ENCODE measurements at regions of chrX and their contacts with region 1.

Region 1: DNA sequence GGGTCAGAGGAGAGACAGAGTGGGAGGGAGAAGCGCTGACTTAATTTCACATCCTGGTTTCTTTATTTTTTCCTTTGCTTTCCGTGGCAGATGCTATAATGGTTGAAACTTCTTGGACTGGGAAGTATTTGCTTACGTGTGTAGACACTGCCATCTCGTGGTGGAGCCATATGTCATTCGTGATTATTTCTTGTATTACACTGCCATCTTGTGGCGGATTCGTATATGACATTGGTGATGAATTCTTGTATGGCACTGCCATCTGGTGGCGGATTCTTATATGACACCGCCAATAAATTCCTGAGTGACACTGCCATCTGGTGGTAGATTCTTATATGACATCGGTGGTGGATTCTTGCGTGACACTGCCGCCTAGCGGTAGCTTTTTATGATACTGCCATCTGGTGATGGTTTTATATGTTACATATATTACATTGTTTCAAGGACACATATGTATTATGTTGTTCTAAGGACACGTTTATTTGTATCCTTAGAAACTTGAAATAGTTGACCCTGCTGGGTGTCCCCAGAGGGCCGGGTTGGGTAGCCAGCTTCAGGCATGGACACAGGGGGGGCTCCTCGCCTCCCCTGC is 37.3 kb upstream of the CLCN4 start:
- DNase-seq: peak; percentile 43 to 88 (median 66)
- ATAC-seq: peak; percentile 80
- H3K4me3 ChIP-seq: no peak overlapping the region
- H3K4me3 Mint-ChIP-seq: no peak overlapping the region
- H3K27ac ChIP-seq: no peak overlapping the region
- H3K27ac Mint-ChIP-seq: peak overlapping the region; percentile 5
- H3K4me1 ChIP-seq: peaks cover 16% of the 10 kb centered on the region
- H3K4me1 Mint-ChIP-seq: peaks cover 5% of the 10 kb centered on the region
- H3K27me3 ChIP-seq: no peaks in the 10 kb centered on the region
- H3K27me3 Mint-ChIP-seq: no peaks in the 10 kb centered on the region
- CTCF ChIP-seq: peak; percentile 100

Region 2: DNA sequence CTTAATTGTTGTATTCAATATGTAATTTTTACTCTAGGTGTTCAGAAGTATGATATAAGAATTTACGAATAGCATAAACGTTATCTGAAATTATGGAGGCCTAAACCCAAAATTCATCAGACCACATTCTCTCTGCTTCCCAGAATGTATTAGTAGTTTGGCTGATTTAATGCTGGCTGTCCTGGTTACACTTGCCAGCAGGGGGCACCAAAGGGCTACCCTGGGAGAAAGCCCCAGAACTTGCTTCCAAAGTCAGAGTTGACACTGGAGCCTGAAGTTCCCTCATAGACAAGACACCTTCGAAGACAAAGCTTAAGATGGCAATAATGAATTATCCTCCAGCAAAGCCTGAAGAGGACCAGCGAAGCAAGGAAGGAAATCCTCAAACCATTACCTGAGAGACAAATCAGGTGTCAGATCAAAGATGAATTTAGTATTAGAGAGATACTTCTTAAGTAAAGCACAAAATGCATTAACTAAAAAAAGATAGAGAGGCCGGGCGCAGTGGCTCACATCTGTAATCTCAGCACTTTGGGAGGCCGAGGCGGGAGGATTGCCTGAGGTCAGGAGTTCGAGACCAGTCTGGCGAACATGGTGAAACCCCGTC is 1376.3 kb before region 1 on chrX:
- CTCF ChIA-PET with region 1: no interaction called
- POLR2A ChIA-PET with region 1: no interaction called
- intact Hi-C with region 1: loop called (anchors 1 to 5 kb)
- DNase-seq: peak; percentile 27 to 74 (median 52)
- ATAC-seq: peak; percentile 46
- H3K4me3 ChIP-seq: no peak overlapping the region
- H3K4me3 Mint-ChIP-seq: no peak overlapping the region
- H3K27ac ChIP-seq: no peak overlapping the region
- H3K27ac Mint-ChIP-seq: no peak overlapping the region
- H3K4me1 ChIP-seq: no peaks in the 10 kb centered on the region
- H3K4me1 Mint-ChIP-seq: no peaks in the 10 kb centered on the region
- H3K27me3 ChIP-seq: peaks cover 0 to 2% of the 10 kb centered on the region in 2 experiments
- H3K27me3 Mint-ChIP-seq: peaks cover 11% of the 10 kb centered on the region
- CTCF ChIP-seq: peak; percentile 71

Region 3: GRCh38 chrX:8815464-8816065 is 1303.9 kb before region 1 on chrX:
- CTCF ChIA-PET with region 1: no interaction called
- POLR2A ChIA-PET with region 1: no interaction called
- intact Hi-C with region 1: loop called in 1 of 2 experiments (anchors 10 kb)
- DNase-seq: peak in 5 of 14 experiments; percentile 5 to 51 (median 49)
- ATAC-seq: no peak
- H3K4me3 ChIP-seq: no peak overlapping the region
- H3K4me3 Mint-ChIP-seq: no peak overlapping the region
- H3K27ac ChIP-seq: no peak overlapping the region
- H3K27ac Mint-ChIP-seq: no peak overlapping the region
- H3K4me1 ChIP-seq: no peaks in the 10 kb centered on the region
- H3K4me1 Mint-ChIP-seq: no peaks in the 10 kb centered on the region
- H3K27me3 ChIP-seq: no peaks in the 10 kb centered on the region
- H3K27me3 Mint-ChIP-seq: peaks cover 5% of the 10 kb centered on the region
- CTCF ChIP-seq: peak; percentile 69

Region 4: GRCh38 chrX:9885150-9885549 is 234.3 kb before region 1 on chrX:
- CTCF ChIA-PET with region 1: no interaction called
- POLR2A ChIA-PET with region 1: no interaction called
- intact Hi-C with region 1: loop called in 1 of 2 experiments (anchors 5 kb)
- DNase-seq: peak in 13 of 14 experiments; percentile 8 to 64 (median 34)
- ATAC-seq: peak; percentile 49
- H3K4me3 ChIP-seq: no peak overlapping the region
- H3K4me3 Mint-ChIP-seq: no peak overlapping the region
- H3K27ac ChIP-seq: no peak overlapping the region
- H3K27ac Mint-ChIP-seq: no peak overlapping the region
- H3K4me1 ChIP-seq: peaks cover 3% of the 10 kb centered on the region
- H3K4me1 Mint-ChIP-seq: peaks cover 6% of the 10 kb centered on the region
- H3K27me3 ChIP-seq: no peaks in the 10 kb centered on the region
- H3K27me3 Mint-ChIP-seq: peaks cover 6% of the 10 kb centered on the region
- CTCF ChIP-seq: peak; percentile 50

Region 5: DNA sequence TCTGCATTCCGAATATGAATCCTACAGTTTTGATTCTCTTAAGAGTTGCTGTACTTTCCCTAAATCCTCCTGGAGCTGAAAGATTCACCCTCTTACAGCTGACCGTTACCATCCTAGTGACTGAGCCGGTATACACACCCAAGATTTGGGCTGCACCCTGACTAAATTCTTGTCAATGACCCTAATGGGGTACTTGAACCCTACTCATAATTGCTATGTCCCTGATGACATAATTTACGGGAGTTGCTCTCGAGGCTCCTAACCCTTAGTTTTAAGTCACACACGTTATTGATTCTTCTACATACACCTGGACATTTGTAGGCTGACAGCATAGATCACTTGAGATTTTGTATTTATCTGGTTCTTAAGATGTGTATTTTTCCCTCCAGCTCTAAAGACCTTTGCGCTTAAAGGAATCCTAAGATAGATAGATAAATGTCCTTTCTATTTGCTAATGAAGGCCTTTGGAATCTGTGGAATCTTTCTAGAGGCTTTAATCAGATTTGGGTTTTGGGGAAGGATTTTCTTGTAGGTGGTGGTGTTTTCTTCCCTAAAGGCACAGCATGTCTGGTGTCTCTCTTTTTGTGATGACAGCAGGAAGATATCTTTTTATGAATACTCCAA is 114.5 kb before region 1 on chrX:
- CTCF ChIA-PET with region 1: interaction called, 12 read pairs
- POLR2A ChIA-PET with region 1: no interaction called
- intact Hi-C with region 1: no loop called
- DNase-seq: no peak
- ATAC-seq: no peak
- H3K4me3 ChIP-seq: no peak overlapping the region
- H3K4me3 Mint-ChIP-seq: no peak overlapping the region
- H3K27ac ChIP-seq: no peak overlapping the region
- H3K27ac Mint-ChIP-seq: no peak overlapping the region
- H3K4me1 ChIP-seq: no peaks in the 10 kb centered on the region
- H3K4me1 Mint-ChIP-seq: no peaks in the 10 kb centered on the region
- H3K27me3 ChIP-seq: no peaks in the 10 kb centered on the region
- H3K27me3 Mint-ChIP-seq: no peaks in the 10 kb centered on the region
- CTCF ChIP-seq: no peak

Region 6: GRCh38 chrX:10039821-10040793 is 79.4 kb before region 1 on chrX:
- CTCF ChIA-PET with region 1: no interaction called
- POLR2A ChIA-PET with region 1: no interaction called
- intact Hi-C with region 1: no loop called
- DNase-seq: no peak
- ATAC-seq: no peak
- H3K4me3 ChIP-seq: no peak overlapping the region
- H3K4me3 Mint-ChIP-seq: no peak overlapping the region
- H3K27ac ChIP-seq: no peak overlapping the region
- H3K27ac Mint-ChIP-seq: no peak overlapping the region
- H3K4me1 ChIP-seq: no peaks in the 10 kb centered on the region
- H3K4me1 Mint-ChIP-seq: no peaks in the 10 kb centered on the region
- H3K27me3 ChIP-seq: no peaks in the 10 kb centered on the region
- H3K27me3 Mint-ChIP-seq: no peaks in the 10 kb centered on the region
- CTCF ChIP-seq: no peak

Region 7: DNA sequence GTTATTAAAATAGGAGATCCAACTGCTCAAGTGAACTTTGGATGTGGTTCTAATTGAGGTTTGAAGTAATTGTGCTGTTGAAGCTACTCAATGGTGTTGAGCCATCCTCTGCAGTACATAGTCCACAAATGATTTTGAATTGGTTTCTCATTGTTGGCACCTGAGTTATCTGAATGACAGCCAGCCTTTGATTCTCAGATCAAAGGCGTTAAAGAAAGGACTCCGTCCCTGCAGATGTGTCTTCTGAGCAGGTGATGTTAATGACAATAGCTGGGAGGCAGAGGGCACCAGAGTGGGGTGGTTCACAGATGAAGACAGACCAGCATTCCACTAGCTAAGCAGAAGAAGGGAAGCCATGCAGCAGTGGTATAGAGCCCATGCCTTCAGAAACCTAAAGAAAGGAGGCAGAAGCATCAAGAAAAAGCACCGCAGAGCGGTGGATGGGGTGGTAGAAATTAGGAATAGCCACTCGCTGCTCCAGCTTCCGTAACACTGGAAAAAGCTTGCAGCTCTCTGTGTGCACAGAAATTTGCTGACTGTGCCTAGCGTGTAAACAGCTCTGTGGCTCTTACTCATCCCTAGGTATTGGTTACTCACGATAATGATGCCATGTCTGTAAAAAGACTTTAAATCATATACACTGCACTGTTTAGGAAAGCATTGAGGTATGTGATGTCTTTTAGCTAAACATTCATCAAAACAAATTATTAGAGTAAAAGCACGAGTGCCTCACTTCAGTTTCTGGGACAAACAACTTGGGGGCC is 41.9 kb before region 1 on chrX:
- CTCF ChIA-PET with region 1: interaction called, 14 read pairs
- POLR2A ChIA-PET with region 1: interaction called, 3 read pairs
- intact Hi-C with region 1: loop called in 1 of 2 experiments (anchors 5 kb)
- DNase-seq: peak in 7 of 14 experiments; percentile 8 to 62 (median 38)
- ATAC-seq: peak; percentile 56
- H3K4me3 ChIP-seq: no peak overlapping the region
- H3K4me3 Mint-ChIP-seq: no peak overlapping the region
- H3K27ac ChIP-seq: no peak overlapping the region
- H3K27ac Mint-ChIP-seq: no peak overlapping the region
- H3K4me1 ChIP-seq: peaks cover 4% of the 10 kb centered on the region
- H3K4me1 Mint-ChIP-seq: peaks cover 6% of the 10 kb centered on the region
- H3K27me3 ChIP-seq: no peaks in the 10 kb centered on the region
- H3K27me3 Mint-ChIP-seq: no peaks in the 10 kb centered on the region
- CTCF ChIP-seq: no peak

Region 8: DNA sequence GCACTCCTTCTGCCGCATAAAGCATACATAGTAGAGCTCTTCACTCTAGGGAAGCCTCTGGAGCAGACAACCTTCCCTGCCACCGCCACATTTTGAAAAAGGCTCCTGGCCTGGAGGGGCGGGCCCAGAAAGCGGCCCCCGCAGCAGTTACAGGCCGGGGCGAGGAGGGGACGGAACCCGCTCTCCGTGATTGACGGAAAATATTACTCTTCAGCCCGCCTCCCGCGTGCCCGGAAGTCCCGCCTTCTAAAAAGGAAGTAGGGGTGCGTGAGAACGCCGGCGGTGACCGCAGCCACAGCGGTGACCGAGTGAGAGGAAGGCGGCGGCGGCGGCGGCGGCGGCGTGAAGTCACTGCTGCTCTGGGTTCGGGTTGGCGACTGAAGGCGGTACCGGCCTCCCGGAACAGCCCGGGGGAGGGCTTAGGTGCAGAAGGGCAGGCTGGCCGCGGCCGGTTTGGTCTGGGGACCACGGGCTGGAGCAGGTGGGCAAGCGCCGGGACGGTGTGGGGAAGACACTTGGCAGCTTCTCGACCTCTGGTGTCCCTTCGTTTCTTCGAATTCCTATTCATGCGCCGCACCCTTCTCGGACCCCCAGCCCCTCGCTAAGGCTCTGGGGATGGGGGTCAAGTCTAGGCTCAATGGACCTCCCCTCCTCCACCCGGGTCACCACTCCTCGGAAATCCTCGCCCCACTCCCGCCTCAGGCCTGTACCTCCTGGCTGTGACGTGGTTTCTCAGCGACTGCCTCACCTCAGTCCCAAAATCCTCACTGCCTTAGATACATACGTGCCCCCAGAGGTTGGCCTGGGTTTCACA is 991.8 kb after region 1 on chrX and contains the start of gene HCCS:
- CTCF ChIA-PET with region 1: no interaction called
- POLR2A ChIA-PET with region 1: no interaction called
- intact Hi-C with region 1: loop called in 1 of 2 experiments (anchors 5 kb)
- DNase-seq: peak; percentile 65 to 92 (median 77)
- ATAC-seq: peak; percentile 85
- H3K4me3 ChIP-seq: peak within 1 kb of the TSS; percentile 80
- H3K4me3 Mint-ChIP-seq: peak within 1 kb of the TSS; percentile 98
- H3K27ac ChIP-seq: peak within 1 kb of the TSS; percentile 87 to 94
- H3K27ac Mint-ChIP-seq: no peak within 1 kb of the TSS
- H3K4me1 ChIP-seq: peaks cover 19% of the 10 kb centered on the region
- H3K4me1 Mint-ChIP-seq: peaks cover 12% of the 10 kb centered on the region
- H3K27me3 ChIP-seq: no peaks in the 10 kb centered on the region
- H3K27me3 Mint-ChIP-seq: no peaks in the 10 kb centered on the region
- CTCF ChIP-seq: no peak
- total RNA-seq, gene HCCS: 7.3 to 7.7 TPM